ENCODE measurements at regions of chr20 and their contacts with region 1.

Region 1: GRCh38 chr20:35092524-35093266 is at the start of gene TRPC4AP:
- DNase-seq: peak; percentile 76
- ATAC-seq: peak; percentile 87
- H3K4me3 ChIP-seq: peak within 1 kb of the TSS; percentile 69 to 91
- H3K27ac ChIP-seq: peak within 1 kb of the TSS; percentile 65
- H3K4me1 ChIP-seq: peaks cover 13 to 36% of the 10 kb centered on the region in 2 experiments
- H3K27me3 ChIP-seq: no peaks in the 10 kb centered on the region
- CTCF ChIP-seq: peak; percentile 74 to 94 (median 85)
- POLR2A ChIP-seq: peak; percentile 48
- RAD21 ChIP-seq: peak; percentile 49; the same call in 1 of the 2 replicates
- total RNA-seq, gene TRPC4AP: 48.6 TPM

Region 2: DNA sequence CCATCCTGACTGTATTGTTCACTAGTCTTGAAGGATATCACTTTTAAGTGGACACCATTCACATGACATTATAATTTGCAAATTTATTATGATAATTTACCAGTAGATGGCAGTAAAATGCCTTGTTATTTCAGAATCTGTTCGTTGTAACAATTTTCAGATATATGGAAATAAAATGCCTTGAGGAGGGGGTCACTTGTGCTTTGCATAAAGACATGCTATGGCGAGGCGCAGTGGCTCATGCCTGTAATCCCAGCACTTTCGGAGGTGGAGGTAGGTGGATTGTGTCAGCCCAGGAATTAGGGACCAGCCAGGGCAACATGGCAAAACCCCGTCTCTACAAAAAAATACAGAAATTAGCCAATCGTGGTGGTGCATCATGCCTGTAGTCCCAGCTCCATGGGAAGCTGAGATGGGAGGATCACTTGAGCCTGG is 258.2 kb before region 1 on chr20:
- CTCF ChIA-PET with region 1: interaction called, 6 read pairs
- POLR2A ChIA-PET with region 1: no interaction called
- RAD21 ChIA-PET with region 1: no interaction called
- intact Hi-C with region 1: loop called (anchors 1 kb)
- DNase-seq: peak; percentile 21
- ATAC-seq: peak; percentile 81
- H3K4me3 ChIP-seq: peak overlapping the region; percentile 8 to 48; a peak in 3 of 4 replicates
- H3K27ac ChIP-seq: no peak overlapping the region
- H3K4me1 ChIP-seq: peaks cover 0 to 6% of the 10 kb centered on the region in 2 experiments; a peak in 1 of 4 replicates
- H3K27me3 ChIP-seq: peaks cover 14% of the 10 kb centered on the region; the same call in 1 of the 2 replicates
- CTCF ChIP-seq: peak; percentile 8 to 55 (median 55); a peak in 3 of 6 replicates
- POLR2A ChIP-seq: no peak
- RAD21 ChIP-seq: peak; percentile 78

Region 3: DNA sequence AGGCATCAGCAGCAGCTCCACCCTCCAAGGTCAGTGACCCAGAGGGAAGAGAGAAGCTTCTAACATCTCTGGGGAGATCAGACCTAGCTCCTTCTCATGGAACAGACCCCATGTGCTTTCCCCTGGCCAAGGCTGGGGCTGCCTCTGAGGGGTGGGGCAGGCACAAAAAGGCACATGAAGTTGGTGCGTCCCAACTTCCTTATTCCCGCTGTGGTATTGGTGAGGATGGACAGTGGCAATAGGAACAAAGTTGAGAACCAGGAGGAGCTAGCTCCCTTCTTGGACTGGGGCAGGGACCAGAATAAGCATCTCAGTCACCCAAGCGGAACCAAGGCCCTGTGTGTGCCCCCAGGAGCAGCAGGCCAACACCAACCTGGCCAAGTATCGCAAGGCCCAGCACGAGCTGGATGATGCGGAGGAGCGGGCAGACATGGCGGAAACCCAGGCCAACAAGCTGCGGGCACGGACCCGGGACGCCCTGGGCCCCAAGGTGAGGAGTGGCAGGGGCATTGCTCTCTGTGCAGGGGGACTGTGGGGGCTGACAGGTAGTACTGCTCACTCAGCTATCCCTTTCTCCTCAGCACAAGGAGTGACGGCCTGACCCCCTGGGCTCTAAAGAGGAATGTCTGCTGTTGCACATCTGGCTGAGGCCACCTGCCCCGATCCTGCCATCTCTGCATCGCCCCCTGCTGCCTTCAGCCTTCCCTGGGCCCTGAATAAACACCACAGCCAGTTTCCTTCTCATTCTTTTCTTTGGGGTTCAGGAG is 90.9 kb before region 1 on chr20:
- CTCF ChIA-PET with region 1: no interaction called
- POLR2A ChIA-PET with region 1: no interaction called
- RAD21 ChIA-PET with region 1: no interaction called
- intact Hi-C with region 1: no loop called
- DNase-seq: no peak
- ATAC-seq: peak; percentile 58
- H3K4me3 ChIP-seq: no peak overlapping the region
- H3K27ac ChIP-seq: no peak overlapping the region
- H3K4me1 ChIP-seq: no peaks in the 10 kb centered on the region
- H3K27me3 ChIP-seq: no peaks in the 10 kb centered on the region
- CTCF ChIP-seq: peak in 2 of 3 experiments; percentile 45 to 48; a peak in 4 of 6 replicates
- POLR2A ChIP-seq: no peak
- RAD21 ChIP-seq: peak; percentile 39; the same call in 1 of the 2 replicates

Region 4: GRCh38 chr20:35111141-35111888 is 18.6 kb after region 1 on chr20:
- CTCF ChIA-PET with region 1: interaction called, 14 read pairs
- POLR2A ChIA-PET with region 1: interaction called, 5 read pairs
- RAD21 ChIA-PET with region 1: no interaction called
- intact Hi-C with region 1: no loop called
- DNase-seq: no peak
- ATAC-seq: peak; percentile 38; the same call in 1 of the 2 replicates
- H3K4me3 ChIP-seq: no peak overlapping the region
- H3K27ac ChIP-seq: no peak overlapping the region
- H3K4me1 ChIP-seq: peaks cover 0 to 16% of the 10 kb centered on the region in 2 experiments; a peak in 2 of 4 replicates
- H3K27me3 ChIP-seq: no peaks in the 10 kb centered on the region
- CTCF ChIP-seq: no peak
- POLR2A ChIP-seq: no peak
- RAD21 ChIP-seq: no peak

Region 5: DNA sequence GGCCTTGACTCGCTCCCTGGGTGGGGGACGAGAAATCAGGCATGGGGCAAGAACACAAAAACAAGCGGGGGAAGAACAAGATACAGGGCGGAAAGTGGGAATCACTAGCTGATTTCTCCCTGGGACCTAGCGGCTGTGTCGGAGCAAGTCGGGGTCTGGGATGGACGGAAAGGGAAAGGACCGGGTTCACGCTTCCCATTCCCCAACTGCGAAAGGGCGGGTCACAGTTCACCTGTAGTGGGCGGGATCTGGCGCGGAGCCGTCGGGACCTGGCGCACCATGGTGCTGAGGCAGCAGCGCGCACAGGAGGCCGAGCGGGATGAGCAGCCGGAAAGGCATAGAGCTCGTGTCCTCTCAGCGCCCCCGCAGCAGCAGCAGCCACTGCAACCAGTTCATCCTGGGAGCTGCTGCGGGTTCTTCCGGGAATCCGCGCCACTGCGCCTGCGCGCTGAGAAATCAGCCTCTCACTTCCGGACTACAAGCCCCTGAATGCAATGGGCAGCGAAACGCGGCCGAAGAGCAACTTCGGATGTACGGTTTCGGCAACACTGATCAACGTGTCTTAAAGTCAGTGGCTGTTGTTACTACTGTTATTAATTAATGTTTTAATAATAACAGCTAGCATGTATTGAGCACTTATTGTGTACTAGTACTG is 54.4 kb after region 1 on chr20 and contains the start of gene EDEM2:
- CTCF ChIA-PET with region 1: interaction called, 20 read pairs
- POLR2A ChIA-PET with region 1: interaction called, 4 read pairs
- RAD21 ChIA-PET with region 1: interaction called in 1 of 2 experiments, 6 read pairs
- intact Hi-C with region 1: loop called (anchors 5 kb)
- DNase-seq: peak; percentile 92
- ATAC-seq: peak; percentile 90
- H3K4me3 ChIP-seq: peak within 1 kb of the TSS; percentile 77 to 98
- H3K27ac ChIP-seq: peak within 1 kb of the TSS; percentile 78
- H3K4me1 ChIP-seq: peaks cover 3 to 12% of the 10 kb centered on the region in 2 experiments; a peak in 2 of 4 replicates
- H3K27me3 ChIP-seq: no peaks in the 10 kb centered on the region
- CTCF ChIP-seq: no peak
- POLR2A ChIP-seq: peak; percentile 81
- RAD21 ChIP-seq: 0 out of 2 replicates have a peak, but pooled peaks have one; percentile 10
- total RNA-seq, gene EDEM2: 22.8 TPM

Region 6: GRCh38 chr20:35207950-35208611 is 115.4 kb after region 1 on chr20:
- CTCF ChIA-PET with region 1: interaction called, 24 read pairs
- POLR2A ChIA-PET with region 1: no interaction called
- RAD21 ChIA-PET with region 1: interaction called in 1 of 2 experiments, 5 read pairs
- intact Hi-C with region 1: loop called (anchors 1 kb)
- DNase-seq: peak; percentile 64
- ATAC-seq: peak; percentile 98
- H3K4me3 ChIP-seq: no peak overlapping the region
- H3K27ac ChIP-seq: peak overlapping the region; percentile 8; the same call in 1 of the 2 replicates
- H3K4me1 ChIP-seq: peaks cover 0 to 9% of the 10 kb centered on the region in 2 experiments; a peak in 2 of 4 replicates
- H3K27me3 ChIP-seq: no peaks in the 10 kb centered on the region
- CTCF ChIP-seq: peak; percentile 74 to 92 (median 84)
- POLR2A ChIP-seq: no peak
- RAD21 ChIP-seq: peak; percentile 98

Region 7: DNA sequence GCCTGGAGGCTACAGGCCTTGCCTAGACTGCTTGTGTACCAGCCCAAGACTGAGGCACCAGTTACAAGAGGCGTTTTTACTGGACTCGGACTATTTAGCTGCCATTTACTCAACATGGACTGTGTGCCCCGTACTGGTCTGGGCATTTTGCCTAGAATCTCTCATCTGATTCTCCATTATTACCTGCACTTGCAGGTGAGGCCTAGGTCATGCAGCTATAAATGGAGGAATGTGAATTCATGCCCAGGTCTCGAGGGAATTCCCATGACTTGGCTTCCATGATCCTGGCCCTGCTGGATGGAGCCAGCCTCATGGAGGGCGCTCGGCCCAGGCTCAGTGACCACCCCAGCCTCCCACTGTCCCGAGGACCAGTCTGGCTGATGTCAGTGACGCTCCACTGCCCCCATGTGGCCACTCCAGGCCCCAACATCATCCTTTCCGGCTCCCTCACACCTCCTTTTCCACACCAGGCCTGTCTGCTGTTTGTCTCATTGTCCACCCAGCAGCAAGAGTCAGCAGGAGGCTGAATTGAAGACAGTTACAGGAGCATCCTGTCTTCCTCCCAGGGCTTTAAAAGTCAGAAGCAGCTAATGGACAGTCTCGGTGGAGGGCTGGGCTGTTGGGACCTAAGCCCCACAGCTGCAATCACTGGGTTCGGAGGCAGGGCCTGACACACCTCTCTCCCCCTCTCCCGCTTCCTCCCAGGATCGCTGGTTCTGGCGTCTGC is 176.5 kb after region 1 on chr20:
- CTCF ChIA-PET with region 1: interaction called, 9 read pairs
- POLR2A ChIA-PET with region 1: no interaction called
- RAD21 ChIA-PET with region 1: no interaction called
- intact Hi-C with region 1: loop called (anchors 5 kb)
- DNase-seq: no peak
- ATAC-seq: peak; percentile 89
- H3K4me3 ChIP-seq: no peak overlapping the region
- H3K27ac ChIP-seq: no peak overlapping the region
- H3K4me1 ChIP-seq: peaks cover 9 to 17% of the 10 kb centered on the region in 2 experiments
- H3K27me3 ChIP-seq: no peaks in the 10 kb centered on the region
- CTCF ChIP-seq: peak; percentile 60 to 89 (median 88); a peak in 5 of 6 replicates
- POLR2A ChIP-seq: no peak
- RAD21 ChIP-seq: peak; percentile 84

Region 8: GRCh38 chr20:35434067-35435005 is 341.6 kb after region 1 on chr20:
- CTCF ChIA-PET with region 1: interaction called, 3 read pairs
- POLR2A ChIA-PET with region 1: no interaction called
- RAD21 ChIA-PET with region 1: no interaction called
- intact Hi-C with region 1: loop called (anchors 5 kb)
- DNase-seq: no peak
- ATAC-seq: no peak
- H3K4me3 ChIP-seq: no peak overlapping the region
- H3K27ac ChIP-seq: no peak overlapping the region
- H3K4me1 ChIP-seq: peaks cover 0 to 10% of the 10 kb centered on the region in 2 experiments; a peak in 3 of 4 replicates
- H3K27me3 ChIP-seq: no peaks in the 10 kb centered on the region
- CTCF ChIP-seq: no peak
- POLR2A ChIP-seq: no peak
- RAD21 ChIP-seq: no peak